ENCODE measurements at regions of chr16 and their contacts with region 1.

Region 1: GRCh38 chr16:20675488-20676267 is 21.8 kb downstream of the ACSM1 start:
- DNase-seq: peak; percentile 69
- H3K4me3 Mint-ChIP-seq: peak overlapping the region; percentile 75
- H3K27ac Mint-ChIP-seq: peak overlapping the region; percentile 31
- H3K4me1 Mint-ChIP-seq: peaks cover 33% of the 10 kb centered on the region
- H3K27me3 Mint-ChIP-seq: no peaks in the 10 kb centered on the region

Region 2: DNA sequence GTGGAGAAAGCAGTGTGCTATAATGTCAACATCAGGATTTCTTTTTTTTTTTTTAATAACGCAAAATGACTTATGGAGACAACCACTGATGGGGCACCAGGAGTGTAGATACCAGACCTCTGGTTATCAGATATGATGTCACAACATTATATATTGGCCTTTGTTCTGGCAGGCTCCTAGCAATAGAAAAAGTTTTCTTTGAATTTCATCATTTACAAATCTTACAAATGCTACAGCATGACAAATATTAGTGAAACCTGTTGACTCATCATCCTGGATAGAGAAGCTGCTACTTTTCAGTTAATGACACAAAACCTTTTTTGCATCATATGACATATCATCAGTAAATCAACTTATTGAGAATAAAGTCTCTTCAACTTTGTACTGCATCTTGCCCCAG is 59.8 kb after region 1 on chr16:
- CTCF ChIA-PET with region 1: interaction called, 5 read pairs
- intact Hi-C with region 1: loop called (anchors 1 kb)
- DNase-seq: no peak
- H3K4me3 Mint-ChIP-seq: no peak overlapping the region
- H3K27ac Mint-ChIP-seq: peak overlapping the region; percentile 77
- H3K4me1 Mint-ChIP-seq: peaks cover 44% of the 10 kb centered on the region
- H3K27me3 Mint-ChIP-seq: no peaks in the 10 kb centered on the region

Measured in activated naive CD4-positive, alpha-beta T cell treated with anti-CD3 and anti-CD28 coated beads for 36 hours (primary cell).